ENCODE measurements at regions of chr4 and their contacts with region 1.

Region 1: GRCh38 chr4:84582302-84583000 is 476 bp upstream of the CDS1 start:
- ATAC-seq: peak; percentile 85 to 92 (median 90)
- H3K4me3 ChIP-seq: peak overlapping the region; percentile 60 to 82 (median 78)
- H3K27ac ChIP-seq: peak overlapping the region in 1 of 2 donors; percentile 17
- H3K4me1 ChIP-seq: peaks cover 5% of the 10 kb centered on the region in 2 donors

Region 2: GRCh38 chr4:84146300-84146959 is 436.0 kb before region 1 on chr4:
- in situ Hi-C with region 1: no loop called
- ATAC-seq: peak in 1 of 8 experiments; percentile 32
- H3K4me3 ChIP-seq: no peak overlapping the region
- H3K27ac ChIP-seq: no peak overlapping the region
- H3K4me1 ChIP-seq: peaks cover 0 to 8% of the 10 kb centered on the region in 2 donors

Region 3: DNA sequence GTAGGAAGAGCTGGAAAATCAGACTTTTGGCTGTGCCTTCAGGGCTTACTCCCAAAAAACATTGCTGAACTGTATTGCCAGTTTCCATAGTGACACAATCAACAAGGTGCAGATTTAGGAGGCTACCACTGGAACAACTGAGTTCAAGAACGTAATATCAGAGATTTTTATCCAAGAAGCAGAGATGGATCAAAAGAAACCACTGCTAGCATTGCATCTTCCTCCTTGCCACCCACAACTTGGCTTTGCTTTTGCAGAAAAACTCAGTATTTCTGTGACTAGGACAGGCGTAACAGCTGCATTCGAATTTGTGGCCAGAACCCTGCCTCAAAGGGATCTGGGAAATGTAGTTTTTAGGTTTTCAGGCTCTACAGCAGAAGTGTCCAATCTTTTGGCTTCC is 411.8 kb after region 1 on chr4:
- in situ Hi-C with region 1: loop called in 1 of 9 experiments (anchors 25 kb)
- ATAC-seq: peak in 2 of 8 experiments; percentile 32 to 54
- H3K4me3 ChIP-seq: no peak overlapping the region
- H3K27ac ChIP-seq: no peak overlapping the region
- H3K4me1 ChIP-seq: peaks cover 0 to 9% of the 10 kb centered on the region in 2 donors